ENCODE measurements at regions of chr22 and their contacts with region 1.

Region 1: GRCh38 chr22:30104501-30105156 is 24.4 kb downstream of the HORMAD2 start:
- DNase-seq: peak in 1 of 9 experiments; percentile 16
- ATAC-seq: no peak
- H3K4me3 ChIP-seq: no peak overlapping the region
- H3K4me3 Mint-ChIP-seq: no peak overlapping the region
- H3K27ac ChIP-seq: no peak overlapping the region
- H3K27ac Mint-ChIP-seq: no peak overlapping the region
- H3K4me1 ChIP-seq: peaks cover 14% of the 10 kb centered on the region
- H3K4me1 Mint-ChIP-seq: peaks cover 20% of the 10 kb centered on the region
- H3K27me3 ChIP-seq: no peaks in the 10 kb centered on the region
- H3K27me3 Mint-ChIP-seq: no peaks in the 10 kb centered on the region
- CTCF ChIP-seq: no peak

Region 2: DNA sequence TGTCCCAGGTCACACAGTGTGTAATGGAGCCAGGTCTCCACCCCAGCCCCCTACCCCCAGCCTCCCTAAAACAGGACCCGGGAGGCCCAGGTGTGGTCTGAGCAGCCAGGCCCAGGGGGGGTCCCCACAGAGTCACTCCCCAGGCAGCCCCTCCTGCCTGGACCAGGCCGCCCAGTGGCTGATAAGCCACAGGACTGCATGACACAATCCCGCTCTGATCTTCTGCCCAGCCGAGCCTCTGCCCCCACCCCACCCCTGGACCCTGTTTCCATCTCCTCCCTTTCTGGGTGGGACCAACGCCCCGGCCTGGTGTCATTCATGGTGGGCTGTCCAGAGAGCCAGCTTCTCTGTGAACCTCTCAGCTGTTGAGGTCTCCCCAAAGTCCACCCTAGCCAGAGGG is 149.7 kb after region 1 on chr22:
- CTCF ChIA-PET with region 1: interaction called, 6 read pairs
- POLR2A ChIA-PET with region 1: no interaction called
- intact Hi-C with region 1: loop called in 1 of 2 experiments (anchors 2 kb)
- DNase-seq: no peak
- ATAC-seq: no peak
- H3K4me3 ChIP-seq: no peak overlapping the region
- H3K4me3 Mint-ChIP-seq: no peak overlapping the region
- H3K27ac ChIP-seq: no peak overlapping the region
- H3K27ac Mint-ChIP-seq: no peak overlapping the region
- H3K4me1 ChIP-seq: peaks cover 5% of the 10 kb centered on the region
- H3K4me1 Mint-ChIP-seq: no peaks in the 10 kb centered on the region
- H3K27me3 ChIP-seq: no peaks in the 10 kb centered on the region
- H3K27me3 Mint-ChIP-seq: no peaks in the 10 kb centered on the region
- CTCF ChIP-seq: no peak

Region 3: DNA sequence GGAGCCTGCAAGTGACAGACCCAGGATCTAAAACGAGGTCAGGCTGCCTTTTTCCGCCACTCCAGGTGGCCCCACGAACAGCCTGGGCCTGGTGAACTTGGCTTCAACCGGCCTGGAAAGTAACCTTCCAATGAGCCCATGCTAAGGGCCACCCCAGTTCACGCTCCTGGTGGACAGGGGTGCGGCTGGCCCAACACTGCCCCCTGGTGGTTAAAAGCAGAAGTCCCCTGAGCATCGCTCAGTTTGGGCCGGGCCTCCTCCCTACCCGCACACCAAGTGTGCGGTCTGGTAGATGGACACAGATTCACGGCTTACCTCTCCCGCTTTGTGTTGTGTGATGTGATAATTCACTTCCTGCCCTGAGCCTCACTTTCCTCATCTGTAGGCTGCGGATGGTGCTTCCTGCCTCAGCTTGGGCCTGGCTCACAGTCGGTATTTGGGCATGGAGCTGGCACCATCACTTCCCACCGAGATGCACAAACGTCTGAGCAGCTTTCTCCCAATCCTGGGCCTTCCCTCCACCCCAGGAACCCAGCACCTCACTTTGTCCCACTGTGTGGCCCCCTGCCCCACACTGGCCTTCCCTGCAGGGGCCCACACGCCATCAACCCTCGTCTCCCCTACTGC is 380.8 kb after region 1 on chr22:
- CTCF ChIA-PET with region 1: no interaction called
- POLR2A ChIA-PET with region 1: interaction called, 3 read pairs
- intact Hi-C with region 1: loop called in 1 of 2 experiments (anchors 10 kb)
- DNase-seq: peak; percentile 60 to 85 (median 75)
- ATAC-seq: peak; percentile 98
- H3K4me3 ChIP-seq: no peak overlapping the region
- H3K4me3 Mint-ChIP-seq: no peak overlapping the region
- H3K27ac ChIP-seq: no peak overlapping the region
- H3K27ac Mint-ChIP-seq: no peak overlapping the region
- H3K4me1 ChIP-seq: no peaks in the 10 kb centered on the region
- H3K4me1 Mint-ChIP-seq: no peaks in the 10 kb centered on the region
- H3K27me3 ChIP-seq: no peaks in the 10 kb centered on the region
- H3K27me3 Mint-ChIP-seq: peaks cover 2% of the 10 kb centered on the region
- CTCF ChIP-seq: peak; percentile 95

Region 4: DNA sequence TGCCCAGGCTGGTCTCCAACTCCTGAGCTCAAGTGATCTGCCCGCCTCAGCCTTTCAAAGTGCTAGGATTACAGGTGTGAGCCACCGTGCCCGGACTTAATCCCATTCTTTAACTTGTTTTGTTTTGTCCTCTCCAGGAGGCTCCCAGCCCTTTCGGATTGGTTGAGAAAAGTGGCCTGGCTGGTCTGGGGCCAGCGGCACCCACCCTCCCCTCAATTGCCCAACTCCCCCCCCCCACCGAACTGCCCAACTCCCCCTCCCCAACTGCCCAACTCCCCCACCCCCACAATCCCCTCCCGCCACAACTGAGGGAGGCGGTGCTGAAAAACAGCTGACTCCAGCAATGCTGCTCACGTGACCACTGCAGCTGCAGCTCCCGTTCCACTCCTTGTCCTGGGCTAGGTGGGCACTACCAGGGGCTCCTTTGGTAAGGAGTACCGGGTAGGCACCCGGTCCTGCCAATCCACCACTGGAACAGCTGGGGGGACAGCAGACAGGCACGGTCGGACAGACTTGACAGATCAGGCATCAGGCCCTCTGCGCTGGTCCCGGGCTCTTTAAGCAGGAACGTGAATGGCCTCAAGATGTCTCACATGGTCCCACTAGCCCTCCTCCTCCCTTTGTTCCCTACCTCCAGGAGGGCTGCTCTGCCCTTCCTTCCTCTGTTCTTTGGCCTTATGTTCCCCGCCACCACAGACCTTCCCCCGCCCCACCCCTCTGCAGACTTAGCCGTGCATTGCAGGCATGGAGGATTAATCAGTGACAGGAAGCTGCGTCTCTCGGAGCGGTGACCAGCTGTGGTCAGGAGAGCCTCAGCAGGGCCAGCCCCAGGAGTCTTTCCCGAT is 502.0 kb after region 1 on chr22 and contains the start of gene TCN2:
- CTCF ChIA-PET with region 1: no interaction called
- POLR2A ChIA-PET with region 1: no interaction called
- intact Hi-C with region 1: loop called in 1 of 2 experiments (anchors 10 kb)
- DNase-seq: peak in 6 of 9 experiments; percentile 6 to 60 (median 24)
- ATAC-seq: peak; percentile 53
- H3K4me3 ChIP-seq: peak within 1 kb of the TSS; percentile 47 to 78
- H3K4me3 Mint-ChIP-seq: peak within 1 kb of the TSS; percentile 85
- H3K27ac ChIP-seq: no peak within 1 kb of the TSS
- H3K27ac Mint-ChIP-seq: no peak within 1 kb of the TSS
- H3K4me1 ChIP-seq: peaks cover 10% of the 10 kb centered on the region
- H3K4me1 Mint-ChIP-seq: peaks cover 18% of the 10 kb centered on the region
- H3K27me3 ChIP-seq: no peaks in the 10 kb centered on the region
- H3K27me3 Mint-ChIP-seq: no peaks in the 10 kb centered on the region
- CTCF ChIP-seq: no peak
- total RNA-seq, gene TCN2: 0.17 TPM in 1 of 2 experiments, not detected in the other